ENCODE measurements at regions of chr3 and their contacts with region 1.

Region 1: DNA sequence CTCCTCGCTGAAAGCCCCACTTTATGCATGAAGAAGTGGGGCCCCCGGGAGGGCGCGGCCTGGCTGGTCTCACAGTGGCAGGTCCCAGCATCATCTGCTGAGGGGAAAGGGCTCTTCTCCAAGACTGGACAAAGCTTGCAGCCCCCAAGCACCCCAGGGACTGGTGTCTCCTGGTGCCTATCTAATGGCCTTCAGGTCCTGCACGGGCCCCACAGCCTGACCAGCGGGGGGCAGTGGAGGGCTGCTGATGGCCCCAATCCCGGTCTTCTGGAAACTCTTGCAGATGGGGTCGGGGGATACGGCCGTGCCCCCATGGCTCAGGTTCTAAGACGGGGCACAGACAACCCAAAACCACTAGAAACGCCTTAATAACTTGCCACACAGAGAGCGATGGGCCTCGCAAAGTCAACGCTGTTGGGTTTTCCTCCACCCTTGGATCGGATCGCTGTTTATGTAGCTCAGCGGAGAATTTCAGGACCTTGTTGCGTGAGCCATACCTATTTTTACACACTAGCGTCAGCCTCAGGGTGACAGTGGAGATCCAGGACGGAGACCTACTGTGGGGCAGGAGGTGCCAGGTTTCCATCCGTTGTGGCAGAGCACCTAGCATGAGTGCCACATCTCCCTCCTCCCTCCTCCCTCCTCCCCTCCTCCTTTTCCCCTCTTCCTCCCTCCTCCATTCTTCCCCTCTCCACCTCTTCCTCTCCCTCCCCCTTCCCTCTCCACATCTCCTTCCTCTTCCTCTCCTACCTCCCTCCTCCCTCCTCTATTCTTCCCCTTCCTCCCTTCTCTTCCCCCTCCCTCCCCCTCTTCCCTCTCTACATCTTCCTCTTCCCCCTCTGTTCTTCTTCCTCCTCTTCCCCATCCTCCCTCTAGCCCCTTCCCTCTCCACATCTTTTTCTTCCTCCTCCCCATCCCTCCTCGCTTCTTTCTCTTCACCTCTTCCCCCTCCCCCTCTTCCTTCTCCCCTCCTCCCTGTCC is 79.3 kb upstream of the ALDH1L1 start:
- DNase-seq: no peak
- H3K4me3 ChIP-seq: no peak overlapping the region
- H3K27ac ChIP-seq: no peak overlapping the region
- H3K4me1 ChIP-seq: peaks cover 6% of the 10 kb centered on the region
- H3K27me3 ChIP-seq: no peaks in the 10 kb centered on the region
- CTCF ChIP-seq: peak; percentile 33 to 57

Region 2: DNA sequence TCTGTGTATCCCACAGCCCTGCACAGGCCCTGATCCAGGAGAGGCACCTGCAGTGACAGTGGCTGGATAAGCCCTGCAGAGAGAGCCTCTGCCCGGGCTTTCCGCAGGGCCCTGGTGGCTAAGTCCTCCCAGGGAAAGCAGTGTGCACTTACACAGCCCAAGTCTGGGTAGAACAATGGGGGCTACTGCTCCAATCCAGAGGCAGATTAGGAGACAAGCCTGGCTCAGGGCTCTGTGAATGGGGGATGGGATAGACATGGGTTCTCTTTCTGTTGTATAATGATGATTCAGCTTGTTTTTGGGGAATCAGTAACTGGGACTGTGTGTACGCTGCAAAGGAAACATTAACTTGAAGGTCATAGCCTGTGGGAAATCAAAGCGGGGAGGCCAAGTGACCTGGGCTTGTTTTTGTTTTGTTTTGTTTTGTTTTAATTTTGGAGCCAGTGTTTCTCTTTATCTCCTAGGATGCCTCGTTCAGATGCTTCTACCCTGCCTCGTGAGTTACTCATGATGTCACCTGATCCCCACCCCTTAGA is 75.2 kb before region 1 on chr3:
- CTCF ChIA-PET with region 1: no interaction called
- dilution Hi-C with region 1: no loop called
- in situ Hi-C with region 1: no loop called
- intact Hi-C with region 1: no loop called
- DNase-seq: no peak
- H3K4me3 ChIP-seq: no peak overlapping the region
- H3K27ac ChIP-seq: no peak overlapping the region
- H3K4me1 ChIP-seq: peaks cover 17% of the 10 kb centered on the region
- H3K27me3 ChIP-seq: no peaks in the 10 kb centered on the region
- CTCF ChIP-seq: no peak

Region 3: GRCh38 chr3:126197854-126198584 is 61.7 kb before region 1 on chr3:
- CTCF ChIA-PET with region 1: no interaction called
- dilution Hi-C with region 1: no loop called
- in situ Hi-C with region 1: no loop called
- intact Hi-C with region 1: loop called (anchors 1 kb)
- DNase-seq: peak; percentile 46
- H3K4me3 ChIP-seq: no peak overlapping the region
- H3K27ac ChIP-seq: no peak overlapping the region
- H3K4me1 ChIP-seq: no peaks in the 10 kb centered on the region
- H3K27me3 ChIP-seq: no peaks in the 10 kb centered on the region
- CTCF ChIP-seq: peak; percentile 87 to 92

Region 4: DNA sequence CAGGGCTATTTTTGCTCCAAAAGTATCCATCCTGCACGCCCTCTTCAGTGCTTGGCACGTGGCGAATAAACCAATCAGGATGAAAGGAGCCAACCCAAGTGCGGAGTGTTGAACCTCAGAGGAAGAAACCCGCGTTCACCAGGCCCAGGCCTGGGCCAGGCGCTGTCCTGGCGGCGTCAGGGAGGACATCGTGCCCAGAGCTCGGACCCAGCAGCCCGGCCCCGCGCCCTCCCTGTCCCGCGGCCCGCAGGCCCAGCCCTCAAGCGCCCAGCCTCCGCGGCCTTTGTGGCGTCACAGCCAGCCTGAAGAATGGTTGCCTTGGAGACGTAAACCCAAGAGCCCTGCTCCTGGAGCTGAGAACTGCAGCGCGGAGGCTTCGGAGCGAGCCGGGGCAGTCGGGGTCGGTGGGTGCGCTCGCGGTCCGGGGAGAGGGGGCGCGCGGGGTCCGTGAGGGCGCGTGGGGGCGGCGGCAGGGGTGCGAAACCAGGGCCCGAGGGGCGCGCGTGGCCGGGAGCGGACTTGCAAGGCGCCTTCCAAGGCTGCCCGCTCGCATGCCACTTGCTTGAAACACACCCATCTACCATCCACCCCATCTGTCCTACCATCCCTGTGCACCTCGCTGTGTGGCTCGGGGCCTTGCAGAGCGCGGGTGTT is 135.0 kb after region 1 on chr3 and contains the start of gene CFAP100:
- CTCF ChIA-PET with region 1: no interaction called
- dilution Hi-C with region 1: no loop called
- in situ Hi-C with region 1: loop called in 1 of 2 experiments (anchors 10 kb)
- intact Hi-C with region 1: loop called (anchors 1 kb)
- DNase-seq: no peak
- H3K4me3 ChIP-seq: no peak within 1 kb of the TSS
- H3K27ac ChIP-seq: no peak within 1 kb of the TSS
- H3K4me1 ChIP-seq: no peaks in the 10 kb centered on the region
- H3K27me3 ChIP-seq: peaks cover 3% of the 10 kb centered on the region
- CTCF ChIP-seq: no peak
- total RNA-seq, gene CFAP100: not detected

Region 5: DNA sequence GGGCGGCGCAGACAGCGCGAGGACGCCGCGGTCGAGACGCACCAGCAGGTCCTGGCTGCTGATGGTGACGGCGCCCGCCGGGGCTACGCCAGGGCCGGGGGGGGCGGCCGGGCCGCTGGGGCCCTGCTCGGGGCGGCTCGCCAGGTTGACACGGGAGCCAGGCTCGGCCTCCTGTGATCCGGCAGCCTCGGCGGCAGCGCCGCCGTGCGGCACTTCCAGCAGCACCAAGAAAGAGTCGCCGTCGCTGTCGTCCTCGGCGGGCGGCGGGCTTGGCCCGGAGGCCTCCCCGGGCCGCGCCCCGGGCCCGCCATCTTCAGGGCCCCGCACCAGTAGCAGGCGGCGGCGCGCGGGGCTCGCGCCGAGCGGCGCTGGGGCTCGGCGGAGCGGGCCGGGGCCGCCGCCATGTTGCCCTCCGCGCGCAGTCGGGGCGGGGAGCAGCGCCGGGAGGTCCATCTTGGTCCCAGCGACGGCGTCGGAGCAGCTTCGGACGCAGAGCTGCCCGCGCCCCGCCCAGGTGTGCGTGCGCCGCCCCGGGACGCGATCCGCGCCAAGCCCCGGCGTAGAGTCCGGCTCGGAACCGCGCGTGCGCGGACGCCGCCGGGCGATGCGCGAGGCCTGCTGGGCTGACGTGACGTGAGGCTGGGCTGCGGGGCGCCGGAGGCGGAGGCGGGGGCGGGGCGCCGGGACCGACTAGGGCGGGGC is 215.9 kb after region 1 on chr3 and contains the start of gene ZXDC:
- CTCF ChIA-PET with region 1: no interaction called
- dilution Hi-C with region 1: no loop called
- in situ Hi-C with region 1: no loop called
- intact Hi-C with region 1: loop called (anchors 2 kb)
- DNase-seq: peak; percentile 93
- H3K4me3 ChIP-seq: peak within 1 kb of the TSS; percentile 78 to 83 (median 80)
- H3K27ac ChIP-seq: peak within 1 kb of the TSS; percentile 69
- H3K4me1 ChIP-seq: peaks cover 34% of the 10 kb centered on the region
- H3K27me3 ChIP-seq: no peaks in the 10 kb centered on the region
- CTCF ChIP-seq: peak; percentile 9 to 60
- total RNA-seq, gene ZXDC: 27.2 to 30.3 TPM

Region 6: DNA sequence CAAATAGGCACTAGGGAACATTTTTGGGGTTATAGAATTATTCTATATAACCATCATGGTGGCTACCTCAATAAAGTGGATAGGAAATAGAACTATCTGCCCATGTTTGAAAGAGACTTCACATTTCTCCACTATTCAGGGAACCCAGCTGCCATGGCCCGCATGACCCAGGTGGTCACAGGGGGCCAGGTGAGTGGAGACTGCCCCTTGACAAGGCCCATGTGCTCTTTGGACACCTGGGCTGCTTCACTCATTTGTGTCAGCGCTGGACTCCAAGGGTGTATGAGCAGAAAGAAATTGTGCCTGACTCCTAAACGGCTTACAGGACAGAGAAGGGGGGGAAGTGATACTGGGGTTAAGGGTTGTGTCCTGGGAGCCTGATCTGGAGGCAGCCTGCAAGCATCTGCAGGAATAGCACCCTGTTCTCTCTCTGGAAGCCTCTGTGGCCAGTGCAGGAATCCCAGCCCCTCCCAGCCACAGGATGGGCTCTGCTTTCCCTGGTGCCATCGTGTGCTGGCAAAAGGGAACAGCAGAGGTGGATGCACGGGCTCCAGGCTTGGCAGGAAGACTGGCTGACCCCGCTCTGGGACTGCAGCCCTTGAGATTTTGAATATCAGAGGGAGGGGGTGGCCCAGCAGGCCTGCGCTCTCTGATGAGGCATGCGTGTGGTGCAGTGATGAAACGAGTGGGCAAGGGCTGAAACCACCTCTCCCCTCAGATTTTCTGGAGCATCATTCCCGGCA is 308.2 kb after region 1 on chr3:
- CTCF ChIA-PET with region 1: no interaction called
- dilution Hi-C with region 1: no loop called
- in situ Hi-C with region 1: no loop called
- intact Hi-C with region 1: no loop called
- DNase-seq: no peak
- H3K4me3 ChIP-seq: no peak overlapping the region
- H3K27ac ChIP-seq: no peak overlapping the region
- H3K4me1 ChIP-seq: peaks cover 8% of the 10 kb centered on the region
- H3K27me3 ChIP-seq: peaks cover 3% of the 10 kb centered on the region
- CTCF ChIP-seq: peak; percentile 12 to 38